Endothelial cell of umbilical vein (primary cell): ENCODE measurements at regions of chr21 and their contacts with region 1.

Region 1: DNA sequence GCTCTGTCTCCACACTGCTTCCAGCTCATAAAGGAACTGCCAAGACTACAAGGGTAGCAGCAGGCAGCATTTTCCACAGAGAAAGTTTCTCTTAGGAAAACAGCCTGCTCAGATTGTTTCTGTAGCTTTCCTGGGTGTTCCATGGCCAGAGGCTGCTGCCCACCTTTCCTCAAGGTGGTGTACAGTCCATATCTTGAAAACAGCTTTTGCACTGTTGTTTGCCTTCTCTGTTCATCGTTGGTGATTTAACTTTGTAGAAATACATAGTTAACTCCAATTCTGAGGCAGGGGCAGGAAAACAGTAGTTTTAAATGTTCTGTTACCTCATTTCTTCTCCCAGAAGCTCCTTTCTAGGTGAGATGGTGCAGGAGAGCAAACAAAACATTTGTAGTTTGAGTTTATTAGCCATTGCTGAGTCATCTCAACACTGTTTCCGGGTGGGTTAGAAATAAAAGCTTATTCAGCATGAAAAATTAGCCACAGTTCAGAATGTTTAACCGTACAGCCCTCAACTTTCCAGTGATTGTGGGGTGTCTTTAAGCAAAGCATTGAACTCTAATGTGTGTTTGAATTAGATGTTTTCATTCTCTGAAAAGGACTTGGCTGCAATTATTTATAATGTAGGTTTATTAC is 41.6 kb downstream of the DIP2A start:
- DNase-seq: peak; percentile 34
- H3K4me3 ChIP-seq: no peak overlapping the region
- H3K27ac ChIP-seq: peak overlapping the region; percentile 48
- H3K4me1 ChIP-seq: peaks cover 14% of the 10 kb centered on the region
- H3K27me3 ChIP-seq: no peaks in the 10 kb centered on the region
- CTCF ChIP-seq: no peak
- POLR2A ChIP-seq: no peak

Region 2: GRCh38 chr21:46489162-46489663 is 11.1 kb before region 1 on chr21:
- CTCF ChIA-PET with region 1: interaction called, 12 read pairs
- POLR2A ChIA-PET with region 1: no interaction called
- dilution Hi-C with region 1: no loop called
- intact Hi-C with region 1: no loop called
- DNase-seq: no peak
- H3K4me3 ChIP-seq: no peak overlapping the region
- H3K27ac ChIP-seq: no peak overlapping the region
- H3K4me1 ChIP-seq: peaks cover 2% of the 10 kb centered on the region
- H3K27me3 ChIP-seq: no peaks in the 10 kb centered on the region
- CTCF ChIP-seq: no peak
- POLR2A ChIP-seq: no peak

Region 3: GRCh38 chr21:46515109-46515508 is 14.8 kb after region 1 on chr21:
- CTCF ChIA-PET with region 1: interaction called, 12 read pairs
- POLR2A ChIA-PET with region 1: no interaction called
- dilution Hi-C with region 1: no loop called
- intact Hi-C with region 1: no loop called
- DNase-seq: peak; percentile 75
- H3K4me3 ChIP-seq: no peak overlapping the region
- H3K27ac ChIP-seq: peak overlapping the region; percentile 32
- H3K4me1 ChIP-seq: peaks cover 17% of the 10 kb centered on the region
- H3K27me3 ChIP-seq: no peaks in the 10 kb centered on the region
- CTCF ChIP-seq: no peak
- POLR2A ChIP-seq: no peak

Region 4: GRCh38 chr21:46639489-46640386 is 139.4 kb after region 1 on chr21:
- CTCF ChIA-PET with region 1: interaction called, 14 read pairs
- POLR2A ChIA-PET with region 1: no interaction called
- dilution Hi-C with region 1: no loop called
- intact Hi-C with region 1: no loop called
- DNase-seq: peak; percentile 62
- H3K4me3 ChIP-seq: no peak overlapping the region
- H3K27ac ChIP-seq: no peak overlapping the region
- H3K4me1 ChIP-seq: peaks cover 28% of the 10 kb centered on the region
- H3K27me3 ChIP-seq: no peaks in the 10 kb centered on the region
- CTCF ChIP-seq: peak; percentile 11 to 16
- POLR2A ChIP-seq: no peak